ENCODE measurements at regions of chr5 and their contacts with region 1.

Region 1: DNA sequence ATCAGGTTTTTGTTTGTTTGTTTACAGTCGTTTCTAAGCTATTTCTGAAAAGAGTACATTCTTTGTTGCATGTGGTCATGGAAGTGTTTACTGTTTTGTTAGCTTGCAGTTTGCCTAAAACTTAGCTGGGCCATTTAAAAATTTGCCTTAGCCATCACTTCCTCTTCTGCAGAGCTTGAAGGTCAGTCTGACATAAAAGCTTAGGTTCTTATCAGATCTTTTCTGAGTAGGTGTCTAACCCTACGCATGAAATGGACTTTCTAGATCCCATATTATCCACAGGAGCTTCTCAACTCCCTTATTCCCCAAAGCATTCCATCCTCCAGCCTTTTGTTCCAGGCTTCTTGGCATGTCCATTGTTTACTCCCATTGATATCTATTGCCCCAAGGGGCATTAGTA is 90.3 kb downstream of the AP3B1 start:
- DNase-seq: no peak
- H3K4me3 ChIP-seq: no peak overlapping the region
- CTCF ChIP-seq: no peak

Region 2: DNA sequence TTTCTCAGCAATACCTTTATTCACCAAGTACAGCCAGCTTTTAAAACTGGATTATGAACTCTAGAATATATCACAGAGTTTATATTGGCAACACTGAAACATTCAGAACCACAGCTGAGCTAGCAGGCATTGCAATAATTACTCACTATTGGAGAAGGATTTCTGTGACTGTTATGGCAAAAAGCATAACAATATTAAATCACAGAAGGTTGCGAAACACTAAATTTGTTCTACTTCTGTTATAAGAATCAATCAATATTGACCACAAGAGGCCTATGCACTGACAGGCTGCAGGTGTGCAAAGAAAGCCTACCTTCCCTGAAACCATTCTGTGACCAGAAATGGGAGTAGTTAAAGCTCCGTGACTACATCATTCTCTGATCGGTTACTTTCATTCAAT is 31.0 kb after region 1 on chr5:
- in situ Hi-C with region 1: loop called (anchors 5 kb)
- DNase-seq: no peak
- H3K4me3 ChIP-seq: no peak overlapping the region
- CTCF ChIP-seq: no peak

Region 3: GRCh38 chr5:78280261-78280660 is 76.0 kb after region 1 on chr5:
- in situ Hi-C with region 1: no loop called
- DNase-seq: no peak
- H3K4me3 ChIP-seq: no peak overlapping the region
- CTCF ChIP-seq: no peak

Region 4: GRCh38 chr5:78594610-78595457 is 390.6 kb after region 1 on chr5:
- in situ Hi-C with region 1: no loop called
- DNase-seq: peak; percentile 98
- H3K4me3 ChIP-seq: no peak overlapping the region
- CTCF ChIP-seq: no peak